ENCODE measurements at regions of chr22 and their contacts with region 1.

Region 1: DNA sequence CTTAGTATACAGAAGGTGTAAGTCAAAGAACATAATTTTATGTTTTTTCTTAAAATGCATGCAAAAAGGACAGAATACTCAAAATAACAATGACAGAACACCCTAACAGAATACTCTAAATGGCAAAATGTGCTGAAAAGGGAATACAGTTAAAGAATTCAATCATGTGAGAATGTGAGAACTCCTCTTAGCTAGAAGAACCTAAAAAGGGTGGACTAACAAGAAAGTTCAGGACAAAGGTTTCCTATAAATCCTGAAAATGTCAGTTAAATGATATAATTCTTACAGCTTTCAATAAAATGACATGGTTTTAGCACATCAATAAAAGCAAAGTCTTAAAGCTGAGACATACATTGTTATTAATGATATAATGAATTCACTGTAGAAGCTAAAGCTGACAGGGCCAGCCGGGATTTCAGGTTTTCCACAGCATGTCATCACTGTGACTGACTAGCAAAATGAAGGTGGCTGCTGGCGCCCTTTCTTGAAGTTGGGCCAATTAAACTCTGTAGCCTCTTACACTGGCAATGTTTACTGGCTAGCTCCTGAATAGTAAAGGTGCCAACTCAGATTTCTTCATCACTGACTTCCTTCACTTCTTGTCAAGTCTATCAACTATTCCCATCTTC is 244.4 kb downstream of the TTC28 start:
- DNase-seq: peak in 4 of 5 donors; percentile 38 to 60 (median 52)
- ATAC-seq: peak; percentile 75 to 90 (median 82)
- H3K4me3 ChIP-seq: no peak overlapping the region
- H3K27ac ChIP-seq: peak overlapping the region in 5 of 12 donors; percentile 0 to 39 (median 6)
- H3K4me1 ChIP-seq: peaks cover 0 to 34% (median 17%) of the 10 kb centered on the region in 12 donors
- H3K27me3 ChIP-seq: no peaks in the 10 kb centered on the region
- CTCF ChIP-seq: no peak
- POLR2A ChIP-seq: no peak

Region 2: GRCh38 chr22:28268171-28268570 is 167.1 kb before region 1 on chr22:
- intact Hi-C with region 1: no loop called
- DNase-seq: no peak
- ATAC-seq: peak in 1 of 4 donors; percentile 18
- H3K4me3 ChIP-seq: no peak overlapping the region
- H3K27ac ChIP-seq: peak overlapping the region in 1 of 12 donors; percentile 37
- H3K4me1 ChIP-seq: peaks cover 0 to 30% (median 16%) of the 10 kb centered on the region in 12 donors
- H3K27me3 ChIP-seq: no peaks in the 10 kb centered on the region
- CTCF ChIP-seq: no peak
- POLR2A ChIP-seq: no peak

Region 3: DNA sequence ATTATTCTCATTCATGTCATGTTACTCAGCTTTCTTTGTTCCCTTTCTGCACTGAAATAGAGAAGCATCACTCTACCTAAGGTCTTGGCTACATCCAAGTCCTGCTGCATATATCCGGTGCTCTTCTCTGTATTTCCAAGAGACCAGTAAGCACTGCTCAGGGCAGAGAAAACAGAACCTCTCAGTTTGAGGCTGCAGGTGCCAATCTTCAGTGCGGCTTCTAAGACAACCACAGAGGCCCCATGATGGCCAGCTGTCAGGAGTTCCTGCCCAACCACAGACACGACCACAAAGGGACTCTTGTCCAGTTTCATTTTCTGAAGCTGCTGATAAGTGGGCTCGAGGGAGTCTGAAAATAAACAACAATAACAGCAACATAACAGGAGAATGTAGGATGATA is 137.8 kb before region 1 on chr22:
- intact Hi-C with region 1: loop called in 1 of 10 experiments (anchors 10 kb)
- DNase-seq: no peak
- ATAC-seq: no peak
- H3K4me3 ChIP-seq: no peak overlapping the region
- H3K27ac ChIP-seq: peak overlapping the region in 1 of 12 donors; percentile 25
- H3K4me1 ChIP-seq: peaks cover 0 to 36% (median 21%) of the 10 kb centered on the region in 12 donors
- H3K27me3 ChIP-seq: no peaks in the 10 kb centered on the region
- CTCF ChIP-seq: no peak
- POLR2A ChIP-seq: no peak

Measured in heart left ventricle (tissue), 16 donors.